ENCODE measurements at regions of chr4 and their contacts with region 1.

Region 1: DNA sequence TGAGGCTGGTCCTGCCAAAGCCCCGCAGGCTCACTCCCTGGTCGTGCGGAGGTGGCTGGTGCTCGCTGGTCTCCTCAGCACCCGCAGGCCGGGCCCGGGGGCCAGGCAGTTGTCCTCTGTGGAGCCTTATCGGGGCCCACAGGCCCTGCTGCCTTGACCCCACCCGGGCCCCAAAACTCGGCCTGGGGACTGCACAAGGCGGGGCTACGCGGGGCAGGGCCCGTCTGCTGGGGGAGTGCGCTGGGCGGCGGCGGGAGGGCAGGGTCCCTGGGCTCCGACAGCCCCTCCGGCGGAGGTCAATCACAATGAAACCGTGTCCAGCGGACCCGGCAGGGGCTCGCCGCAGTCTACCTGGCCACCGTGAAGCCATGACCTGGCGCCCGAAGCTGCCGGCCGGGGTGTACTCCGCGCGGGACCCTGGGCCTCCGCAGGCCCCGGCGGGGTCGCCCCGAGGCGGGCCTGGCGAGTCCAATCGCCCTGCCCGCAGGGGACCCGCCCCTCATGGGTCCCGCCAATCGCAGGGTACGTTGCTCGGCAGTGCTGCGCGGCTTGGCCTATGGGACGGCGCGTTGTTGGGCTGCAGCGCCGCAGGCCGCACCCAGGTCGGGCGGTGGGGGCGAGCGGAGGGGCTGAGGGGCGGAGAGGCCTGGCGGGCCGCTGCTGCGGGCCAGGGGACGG is at the start of gene ADD1:
- DNase-seq: peak; percentile 89 to 99 (median 94)

Region 2: GRCh38 chr4:2515830-2516550 is 327.4 kb before region 1 on chr4:
- intact Hi-C with region 1: no loop called
- DNase-seq: peak in 3 of 10 donors; percentile 31 to 60 (median 57)

Region 3: DNA sequence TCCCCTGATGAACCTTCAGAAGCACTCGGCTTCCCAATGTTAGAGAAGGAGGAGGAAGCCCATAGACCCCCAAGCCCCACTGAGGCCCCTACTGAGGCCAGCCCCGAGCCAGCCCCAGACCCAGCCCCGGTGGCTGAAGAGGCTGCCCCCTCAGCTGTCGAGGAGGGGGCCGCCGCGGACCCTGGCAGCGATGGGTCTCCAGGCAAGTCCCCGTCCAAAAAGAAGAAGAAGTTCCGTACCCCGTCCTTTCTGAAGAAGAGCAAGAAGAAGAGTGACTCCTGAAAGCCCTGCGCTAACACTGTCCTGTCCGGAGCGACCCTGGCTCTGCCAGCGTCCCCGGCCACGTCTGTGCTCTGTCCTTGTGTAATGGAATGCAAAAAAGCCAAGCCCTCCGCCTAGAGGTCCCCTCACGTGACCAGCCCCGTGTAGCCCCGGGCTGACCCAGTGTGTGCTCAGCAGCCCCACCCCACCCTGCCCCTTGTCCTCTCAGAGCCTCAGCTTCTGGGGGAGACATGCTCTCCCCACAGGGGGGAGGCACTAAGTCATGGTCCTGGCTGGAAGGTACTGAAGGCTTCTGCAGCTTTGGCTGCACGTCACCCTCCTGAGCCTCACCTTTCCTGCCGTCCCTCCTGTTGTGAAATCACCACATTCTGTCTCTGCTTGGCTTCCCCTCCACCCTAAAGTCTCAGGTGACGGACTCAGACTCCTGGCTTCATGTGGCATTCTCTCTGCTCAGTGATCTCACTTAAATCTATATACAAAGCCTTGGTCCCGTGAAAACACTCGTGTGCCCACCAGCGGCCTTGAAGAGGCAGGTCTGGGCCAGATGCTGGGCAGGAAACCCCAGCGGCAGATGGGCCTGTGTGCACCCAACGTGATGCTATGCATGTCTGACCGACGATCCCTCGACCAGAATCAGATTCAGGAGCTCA is 85.1 kb after region 1 on chr4:
- intact Hi-C with region 1: loop called (anchors 2 kb)
- DNase-seq: peak in 2 of 10 donors; percentile 58 to 68

Measured in posterior cingulate gyrus (tissue), 11 donors.